Mammary epithelial cell (primary cell): ENCODE measurements at regions of chr11 and their contacts with region 1.

Region 1: GRCh38 chr11:94767761-94768601 is at the start of gene AMOTL1:
- DNase-seq: peak; percentile 87
- H3K4me3 ChIP-seq: peak within 1 kb of the TSS; percentile 52 to 89 (median 64)
- H3K27ac ChIP-seq: peak within 1 kb of the TSS; percentile 91
- H3K4me1 ChIP-seq: peaks cover 47% of the 10 kb centered on the region
- H3K27me3 ChIP-seq: no peaks in the 10 kb centered on the region
- CTCF ChIP-seq: peak in 1 of 2 donors; percentile 23
- total RNA-seq, gene AMOTL1: 181 to 201 TPM

Region 2: GRCh38 chr11:94721565-94722292 is 46.3 kb before region 1 on chr11:
- CTCF ChIA-PET with region 1: no interaction called
- dilution Hi-C with region 1: no loop called
- in situ Hi-C with region 1: no loop called
- intact Hi-C with region 1: no loop called
- DNase-seq: peak; percentile 82
- H3K4me3 ChIP-seq: no peak overlapping the region
- H3K27ac ChIP-seq: peak overlapping the region; percentile 10
- H3K4me1 ChIP-seq: peaks cover 26% of the 10 kb centered on the region
- H3K27me3 ChIP-seq: no peaks in the 10 kb centered on the region
- CTCF ChIP-seq: no peak

Region 3: DNA sequence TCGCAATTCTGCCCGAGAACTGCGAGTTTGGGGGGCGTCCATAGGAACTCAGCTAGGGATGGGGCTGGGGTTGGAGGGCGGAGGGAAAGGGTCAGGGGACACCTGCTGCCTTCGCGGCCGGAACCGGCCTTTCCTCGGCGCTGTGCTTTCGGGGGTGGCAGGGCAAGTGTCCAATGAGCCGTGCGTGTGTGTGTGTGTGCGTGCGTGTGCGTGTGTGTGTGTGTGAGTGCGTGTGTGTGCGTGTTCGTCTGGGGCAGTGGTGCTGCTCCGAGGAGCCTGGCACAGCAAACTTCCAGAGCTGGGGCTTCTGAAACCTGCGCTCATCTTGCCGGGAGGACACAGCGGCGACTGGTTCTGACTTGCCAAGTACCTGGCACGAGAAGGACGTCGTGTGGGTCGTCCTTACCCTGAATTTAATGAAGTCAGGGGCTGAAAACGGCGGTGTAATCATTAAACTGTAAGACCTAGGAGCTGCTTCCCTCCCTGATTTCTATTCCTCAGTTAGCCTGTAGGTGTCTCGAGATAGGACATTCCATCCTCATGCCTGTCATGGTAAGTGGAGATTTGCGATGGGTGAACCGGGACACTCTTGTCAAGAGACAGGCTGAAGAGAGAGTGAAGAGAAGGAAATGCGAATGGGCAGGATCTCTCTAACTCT is 26.8 kb before region 1 on chr11:
- CTCF ChIA-PET with region 1: interaction called, 6 read pairs
- dilution Hi-C with region 1: no loop called
- in situ Hi-C with region 1: no loop called
- intact Hi-C with region 1: loop called (anchors 1 kb)
- DNase-seq: peak; percentile 69
- H3K4me3 ChIP-seq: peak overlapping the region; percentile 34 to 45 (median 39)
- H3K27ac ChIP-seq: peak overlapping the region; percentile 84
- H3K4me1 ChIP-seq: peaks cover 52% of the 10 kb centered on the region
- H3K27me3 ChIP-seq: no peaks in the 10 kb centered on the region
- CTCF ChIP-seq: peak; percentile 51 to 66

Region 4: DNA sequence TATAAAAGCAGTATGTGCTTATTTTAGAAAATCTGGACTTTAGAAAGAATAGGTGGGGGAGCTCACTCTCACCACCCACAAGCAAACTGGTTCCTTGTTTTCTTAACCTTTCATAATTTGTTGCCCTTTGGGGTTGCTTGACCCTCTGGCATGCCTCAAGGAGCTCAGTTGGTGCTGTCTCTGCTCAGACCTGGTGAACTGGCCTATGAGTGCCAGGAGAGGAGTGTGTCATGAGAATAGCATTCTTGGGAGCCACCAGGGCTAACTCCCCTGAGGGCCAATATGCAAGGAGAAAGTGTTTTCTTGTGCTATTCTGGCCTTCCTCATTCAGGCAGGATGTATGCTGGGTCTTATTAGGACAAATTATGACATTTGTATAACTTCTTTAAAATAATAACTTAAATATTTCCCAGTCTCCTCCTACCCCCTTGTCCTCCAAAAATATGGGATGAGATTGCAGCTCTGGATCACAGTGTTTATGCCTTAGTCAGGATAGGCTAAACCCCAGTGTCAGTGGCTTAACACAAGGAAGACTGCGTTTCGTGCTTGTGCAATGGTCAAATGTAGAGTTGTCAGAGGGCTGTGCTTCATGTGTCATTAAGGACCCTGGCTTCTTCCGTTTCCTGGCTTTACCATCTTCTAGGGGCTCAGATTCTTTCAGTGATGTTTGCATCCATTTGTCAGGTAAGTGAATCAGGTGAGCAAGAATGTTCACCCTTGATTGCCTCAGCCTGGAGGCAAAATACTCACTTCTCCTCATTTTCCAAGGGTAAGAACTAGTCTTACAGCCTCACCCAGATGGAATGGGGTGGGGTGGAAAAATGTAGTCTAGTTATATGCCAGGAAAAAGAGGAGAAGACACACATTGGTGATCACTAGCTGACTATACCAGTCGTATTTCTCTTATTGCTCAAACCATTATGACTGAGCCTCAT is 20.6 kb before region 1 on chr11:
- CTCF ChIA-PET with region 1: no interaction called
- dilution Hi-C with region 1: no loop called
- in situ Hi-C with region 1: no loop called
- intact Hi-C with region 1: loop called (anchors 1 kb)
- DNase-seq: peak; percentile 97
- H3K4me3 ChIP-seq: no peak overlapping the region
- H3K27ac ChIP-seq: peak overlapping the region; percentile 99
- H3K4me1 ChIP-seq: peaks cover 64% of the 10 kb centered on the region
- H3K27me3 ChIP-seq: no peaks in the 10 kb centered on the region
- CTCF ChIP-seq: no peak

Region 5: GRCh38 chr11:94826415-94826814 is 58.4 kb after region 1 on chr11:
- CTCF ChIA-PET with region 1: no interaction called
- dilution Hi-C with region 1: no loop called
- in situ Hi-C with region 1: no loop called
- intact Hi-C with region 1: loop called (anchors 10 kb)
- DNase-seq: no peak
- H3K4me3 ChIP-seq: no peak overlapping the region
- H3K27ac ChIP-seq: no peak overlapping the region
- H3K4me1 ChIP-seq: peaks cover 12% of the 10 kb centered on the region
- H3K27me3 ChIP-seq: no peaks in the 10 kb centered on the region
- CTCF ChIP-seq: no peak

Region 6: DNA sequence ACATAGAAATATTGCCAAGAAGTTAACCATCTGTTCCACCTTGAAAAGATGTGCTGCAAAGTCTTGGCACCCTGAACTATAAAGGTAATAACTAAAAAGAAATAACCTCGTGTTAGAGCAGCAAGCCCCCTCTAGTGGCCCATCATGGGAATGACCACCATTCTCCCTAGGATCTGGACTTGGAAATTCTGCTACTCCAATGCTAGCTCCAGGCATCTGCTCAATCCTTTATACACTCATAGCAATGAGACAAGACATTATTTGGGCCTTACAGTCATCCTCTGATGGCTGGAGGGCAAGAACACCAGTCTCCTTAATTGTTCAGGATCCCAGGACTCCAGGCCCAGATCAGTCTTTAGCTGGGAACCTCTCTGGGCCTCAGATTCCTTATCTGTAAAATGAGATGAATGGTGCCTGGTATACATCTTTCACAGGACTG is 129.4 kb after region 1 on chr11:
- CTCF ChIA-PET with region 1: no interaction called
- dilution Hi-C with region 1: no loop called
- in situ Hi-C with region 1: no loop called
- intact Hi-C with region 1: loop called (anchors 10 kb)
- DNase-seq: peak; percentile 21
- H3K4me3 ChIP-seq: no peak overlapping the region
- H3K27ac ChIP-seq: no peak overlapping the region
- H3K4me1 ChIP-seq: peaks cover 6% of the 10 kb centered on the region
- H3K27me3 ChIP-seq: no peaks in the 10 kb centered on the region
- CTCF ChIP-seq: peak; percentile 73 to 89